ENCODE measurements at regions of chr7 and their contacts with region 1.

Region 1: DNA sequence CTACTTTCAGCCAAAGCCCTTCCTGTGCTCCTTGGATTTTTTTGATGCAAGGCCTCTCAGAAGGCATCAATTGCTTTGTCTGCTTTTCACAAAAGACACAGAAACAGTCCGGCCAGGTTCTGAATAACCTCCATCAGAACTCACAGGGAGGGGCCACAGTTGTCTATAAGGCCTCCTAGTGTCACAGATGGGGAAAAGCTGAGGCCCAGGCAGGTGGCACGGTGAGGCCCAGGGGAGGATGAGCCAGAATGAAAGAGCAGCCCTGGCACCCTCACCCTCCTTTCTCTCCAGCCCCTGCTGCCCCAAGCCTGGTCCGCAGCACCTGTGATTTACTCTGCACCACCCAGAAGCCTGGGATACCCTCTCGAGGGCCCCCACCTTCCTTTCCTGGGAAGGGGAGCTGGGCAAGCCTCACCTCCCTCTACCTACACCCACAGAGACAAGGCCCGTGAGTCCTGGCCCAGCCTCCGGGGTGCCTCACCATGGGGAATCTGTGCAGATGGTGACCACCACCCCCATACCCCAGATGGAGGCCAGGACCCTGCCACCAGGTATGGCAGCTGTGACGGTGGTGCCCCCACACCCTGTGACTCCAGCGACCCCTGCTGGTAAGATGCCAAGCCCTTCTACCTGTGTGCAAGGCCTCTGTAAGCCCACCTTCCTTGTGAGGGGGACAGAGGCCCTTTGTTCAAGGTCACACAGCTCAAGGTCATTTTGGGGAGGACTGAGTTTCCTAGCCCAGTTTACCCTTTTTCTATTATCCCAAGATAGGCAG is 26.2 kb upstream of the ZNF467 start:
- DNase-seq: peak; percentile 43 to 59 (median 56)
- H3K4me3 ChIP-seq: no peak overlapping the region
- H3K4me3 Mint-ChIP-seq: no peak overlapping the region
- H3K27ac ChIP-seq: no peak overlapping the region
- H3K27ac Mint-ChIP-seq: no peak overlapping the region
- H3K4me1 ChIP-seq: no peaks in the 10 kb centered on the region
- H3K4me1 Mint-ChIP-seq: peaks cover 0 to 4% (median 0%) of the 10 kb centered on the region in 4 donors
- H3K27me3 ChIP-seq: no peaks in the 10 kb centered on the region
- H3K27me3 Mint-ChIP-seq: peaks cover 0 to 2% of the 10 kb centered on the region in 2 donors

Region 2: GRCh38 chr7:149355390-149356048 is 444.1 kb before region 1 on chr7:
- CTCF ChIA-PET with region 1: no interaction called
- POLR2A ChIA-PET with region 1: no interaction called
- intact Hi-C with region 1: no loop called
- DNase-seq: no peak
- H3K4me3 ChIP-seq: no peak overlapping the region
- H3K4me3 Mint-ChIP-seq: no peak overlapping the region
- H3K27ac ChIP-seq: no peak overlapping the region
- H3K27ac Mint-ChIP-seq: no peak overlapping the region
- H3K4me1 ChIP-seq: no peaks in the 10 kb centered on the region
- H3K4me1 Mint-ChIP-seq: no peaks in the 10 kb centered on the region
- H3K27me3 ChIP-seq: no peaks in the 10 kb centered on the region
- H3K27me3 Mint-ChIP-seq: peaks cover 6 to 11% of the 10 kb centered on the region in 2 donors

Region 3: GRCh38 chr7:149662591-149663095 is 136.9 kb before region 1 on chr7:
- CTCF ChIA-PET with region 1: interaction called, 18 read pairs
- POLR2A ChIA-PET with region 1: no interaction called
- intact Hi-C with region 1: loop called (anchors 1 kb)
- DNase-seq: peak; percentile 42 to 63 (median 48)
- H3K4me3 ChIP-seq: no peak overlapping the region
- H3K4me3 Mint-ChIP-seq: no peak overlapping the region
- H3K27ac ChIP-seq: no peak overlapping the region
- H3K27ac Mint-ChIP-seq: no peak overlapping the region
- H3K4me1 ChIP-seq: no peaks in the 10 kb centered on the region
- H3K4me1 Mint-ChIP-seq: no peaks in the 10 kb centered on the region
- H3K27me3 ChIP-seq: no peaks in the 10 kb centered on the region
- H3K27me3 Mint-ChIP-seq: peaks cover 22 to 49% of the 10 kb centered on the region in 2 donors

Measured in CD4-positive, alpha-beta memory T cell (primary cell).